ENCODE measurements at regions of chr15 and their contacts with region 1.

Region 1: GRCh38 chr15:90412356-90413194 is 24.5 kb downstream of the IQGAP1 start:
- DNase-seq: peak in 1 of 2 experiments; percentile 47
- ATAC-seq: peak; percentile 81 to 88
- H3K4me3 ChIP-seq: no peak overlapping the region; the same call in 2 of the 3 replicates
- H3K27ac ChIP-seq: peak overlapping the region; percentile 65 to 72; a peak in 4 of 6 replicates
- H3K4me1 ChIP-seq: peaks cover 52% of the 10 kb centered on the region
- CTCF ChIP-seq: no peak
- EP300 ChIP-seq: no peak
- POLR2A ChIP-seq: no peak
- RAD21 ChIP-seq: no peak

Region 2: DNA sequence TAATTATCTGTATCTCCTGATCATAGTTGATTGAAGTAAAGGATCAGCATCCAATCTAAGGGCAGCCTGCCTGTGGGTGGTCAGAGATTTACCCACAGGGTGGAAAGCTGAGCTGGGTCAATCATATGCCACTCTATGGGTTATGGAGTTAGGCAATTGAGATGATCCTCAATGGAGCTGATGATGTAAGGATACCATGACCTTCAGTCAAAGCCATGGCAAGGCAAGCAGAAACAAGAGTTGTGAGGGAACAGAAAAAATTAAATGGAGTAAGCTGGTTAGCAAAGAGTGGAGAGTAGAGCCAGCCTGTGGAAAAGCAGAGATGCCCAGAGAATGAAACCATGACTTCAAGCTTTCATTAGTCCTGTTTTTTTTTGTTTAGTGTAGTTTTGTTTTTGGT is 30.3 kb before region 1 on chr15:
- CTCF ChIA-PET with region 1: no interaction called
- POLR2A ChIA-PET with region 1: no interaction called
- DNase-seq: no peak
- ATAC-seq: no peak
- H3K4me3 ChIP-seq: no peak overlapping the region
- H3K27ac ChIP-seq: no peak overlapping the region
- H3K4me1 ChIP-seq: no peaks in the 10 kb centered on the region
- CTCF ChIP-seq: no peak
- EP300 ChIP-seq: no peak
- POLR2A ChIP-seq: no peak
- RAD21 ChIP-seq: no peak

Region 3: DNA sequence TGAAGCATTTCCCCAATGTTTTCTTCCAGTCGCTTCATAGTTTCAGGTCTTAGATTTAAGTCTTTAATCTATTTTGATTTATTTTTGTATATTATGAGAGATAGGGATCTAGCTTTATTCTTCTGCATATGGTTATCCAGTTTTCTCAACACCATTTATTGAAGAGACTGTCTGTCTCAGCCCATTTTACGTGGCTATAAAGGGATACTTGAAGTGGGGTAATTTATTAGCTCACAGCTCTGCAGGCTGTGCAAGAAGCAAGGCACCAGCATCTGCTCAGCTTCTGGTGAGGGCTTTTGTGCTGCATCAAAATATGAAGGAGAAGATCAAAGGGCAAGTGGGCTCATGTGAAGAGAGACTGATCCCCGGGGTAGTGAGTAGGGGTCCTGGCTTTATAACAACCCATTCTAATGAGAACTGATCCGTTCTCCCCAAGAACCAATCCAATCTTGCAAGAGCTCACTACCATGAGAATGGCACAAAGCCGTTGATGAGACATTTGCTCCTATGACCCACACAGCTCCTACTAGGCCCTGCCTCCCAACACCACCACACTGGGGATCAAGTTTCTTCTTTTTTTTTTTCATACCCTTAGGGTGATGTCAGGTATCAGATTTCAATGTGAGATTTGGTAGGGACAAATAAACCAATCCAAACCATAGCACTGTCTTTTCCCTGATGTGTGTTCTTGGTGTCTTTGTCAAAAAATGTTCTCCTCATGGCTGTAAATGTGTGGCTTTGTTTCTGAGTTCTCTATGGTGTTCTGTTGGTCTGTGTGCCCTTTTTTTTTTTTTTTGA is 38.7 kb after region 1 on chr15:
- CTCF ChIA-PET with region 1: interaction called, 3 read pairs
- POLR2A ChIA-PET with region 1: interaction called, 10 read pairs
- DNase-seq: peak in 1 of 2 experiments; percentile 9
- ATAC-seq: 0 out of 6 replicates have a peak, but pooled peaks of 1 of the 2 experiments have one; percentile 18
- H3K4me3 ChIP-seq: no peak overlapping the region
- H3K27ac ChIP-seq: no peak overlapping the region
- H3K4me1 ChIP-seq: no peaks in the 10 kb centered on the region
- CTCF ChIP-seq: no peak
- EP300 ChIP-seq: no peak
- POLR2A ChIP-seq: no peak
- RAD21 ChIP-seq: no peak